Activated CD4-positive, alpha-beta memory T cell treated with anti-CD3 and anti-CD28 coated beads, Interleukin-2, amount 10 ng/mL, durations not matched to agents 7 days and 5 days (primary cell): ENCODE measurements at regions of chr2 and their contacts with region 1.

Region 1: DNA sequence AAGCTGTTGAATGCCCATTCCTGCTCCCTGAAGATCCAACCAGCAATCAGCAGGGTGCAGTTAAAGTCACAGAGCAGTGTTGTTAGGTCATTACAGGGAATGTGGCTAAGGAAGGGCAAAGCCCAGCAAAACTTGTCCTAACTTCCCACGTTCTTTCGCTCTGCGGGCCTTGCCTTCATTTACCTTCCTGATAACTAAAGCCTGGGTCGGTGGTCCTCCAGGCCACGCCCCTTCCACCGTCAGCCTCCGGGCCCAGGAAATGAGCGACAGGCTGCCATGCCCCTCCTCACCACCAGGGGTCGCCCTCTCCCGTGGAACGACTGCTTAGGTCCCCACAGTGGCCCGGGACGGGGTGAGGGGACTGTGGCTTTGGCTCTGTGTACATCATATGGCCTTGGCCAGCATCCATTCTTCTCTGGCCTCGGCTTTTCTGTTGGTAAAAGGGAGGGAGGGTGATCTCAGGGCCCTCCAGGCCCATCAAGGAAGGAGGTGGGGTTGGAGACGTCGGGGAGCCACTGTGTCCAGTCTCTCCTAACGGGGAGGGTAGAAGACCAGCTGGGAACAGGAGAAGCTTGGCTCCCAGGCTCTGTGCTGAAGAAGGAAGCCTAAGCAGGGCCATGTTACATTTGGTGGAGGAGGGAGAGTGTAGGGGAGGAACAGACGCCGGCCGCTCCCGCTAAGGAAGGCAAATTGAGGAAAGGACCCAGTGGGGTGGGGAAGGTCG is 2.2 kb downstream of the SH2D6 start:
- DNase-seq: peak; percentile 92
- H3K4me3 Mint-ChIP-seq: peak overlapping the region; percentile 66
- H3K27ac Mint-ChIP-seq: peak overlapping the region; percentile 77
- H3K4me1 Mint-ChIP-seq: peaks cover 33% of the 10 kb centered on the region
- H3K27me3 Mint-ChIP-seq: no peaks in the 10 kb centered on the region

Region 2: GRCh38 chr2:85354286-85355072 is 66.2 kb before region 1 on chr2 and contains the starts of genes ELMOD3 and RETSAT:
- CTCF ChIA-PET with region 1: interaction called, 8 read pairs
- POLR2A ChIA-PET with region 1: interaction called, 26 read pairs
- DNase-seq: peak; percentile 98
- H3K4me3 Mint-ChIP-seq: peak within 1 kb of the TSS; percentile 99
- H3K27ac Mint-ChIP-seq: peak within 1 kb of the TSS; percentile 93
- H3K4me1 Mint-ChIP-seq: peaks cover 45% of the 10 kb centered on the region
- H3K27me3 Mint-ChIP-seq: no peaks in the 10 kb centered on the region
- total RNA-seq, gene ELMOD3: 19.2 to 19.4 TPM
- total RNA-seq, gene RETSAT: 30.1 to 31.1 TPM

Region 3: DNA sequence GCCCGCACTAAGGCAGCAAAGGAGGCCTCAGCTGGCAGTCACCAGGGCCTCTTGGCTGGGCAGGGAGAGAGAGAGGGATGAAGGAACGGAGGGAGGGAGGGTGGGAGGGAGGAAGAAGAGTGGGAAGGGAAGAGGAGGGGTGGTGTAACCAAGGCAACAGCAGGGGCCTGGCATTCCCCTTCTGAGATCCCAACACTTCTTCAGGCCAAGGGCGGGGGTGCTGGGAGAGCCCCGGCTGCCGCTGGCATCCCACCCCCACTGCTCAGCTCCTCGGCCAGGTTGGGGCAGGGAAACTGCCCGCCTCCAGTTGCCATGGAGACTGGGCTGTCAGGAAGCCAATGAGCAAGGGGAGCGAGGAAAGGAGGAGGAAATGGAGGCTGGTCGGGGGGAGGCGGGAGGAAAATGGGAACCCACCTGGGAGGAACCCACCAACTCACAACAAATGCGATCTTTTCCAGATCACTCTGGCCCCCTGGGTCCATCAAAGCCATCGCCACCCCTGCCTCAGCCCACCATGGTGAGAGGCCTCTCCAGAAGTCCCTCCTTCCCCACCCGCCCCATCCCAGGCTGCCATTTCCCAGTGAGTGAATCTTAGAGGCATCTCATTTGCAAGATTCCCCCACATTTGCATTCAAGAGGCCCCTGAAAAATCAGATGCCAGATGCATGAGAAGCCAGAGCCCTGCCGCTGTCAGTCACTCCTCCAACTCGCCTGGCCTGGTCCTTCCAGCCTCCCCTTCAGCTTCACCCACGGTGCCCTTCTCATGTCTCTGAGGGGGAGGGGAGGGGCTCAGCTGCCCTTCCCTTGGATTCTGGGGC is 10.3 kb after region 1 on chr2:
- CTCF ChIA-PET with region 1: interaction called, 17 read pairs
- POLR2A ChIA-PET with region 1: interaction called, 18 read pairs
- DNase-seq: no peak
- H3K4me3 Mint-ChIP-seq: no peak overlapping the region
- H3K27ac Mint-ChIP-seq: no peak overlapping the region
- H3K4me1 Mint-ChIP-seq: no peaks in the 10 kb centered on the region
- H3K27me3 Mint-ChIP-seq: no peaks in the 10 kb centered on the region

Region 4: GRCh38 chr2:85551698-85552678 is 131.3 kb after region 1 on chr2:
- CTCF ChIA-PET with region 1: interaction called, 182 read pairs
- POLR2A ChIA-PET with region 1: interaction called, 69 read pairs
- DNase-seq: peak; percentile 91
- H3K4me3 Mint-ChIP-seq: no peak overlapping the region
- H3K27ac Mint-ChIP-seq: peak overlapping the region; percentile 7
- H3K4me1 Mint-ChIP-seq: peaks cover 5% of the 10 kb centered on the region
- H3K27me3 Mint-ChIP-seq: no peaks in the 10 kb centered on the region

Region 5: DNA sequence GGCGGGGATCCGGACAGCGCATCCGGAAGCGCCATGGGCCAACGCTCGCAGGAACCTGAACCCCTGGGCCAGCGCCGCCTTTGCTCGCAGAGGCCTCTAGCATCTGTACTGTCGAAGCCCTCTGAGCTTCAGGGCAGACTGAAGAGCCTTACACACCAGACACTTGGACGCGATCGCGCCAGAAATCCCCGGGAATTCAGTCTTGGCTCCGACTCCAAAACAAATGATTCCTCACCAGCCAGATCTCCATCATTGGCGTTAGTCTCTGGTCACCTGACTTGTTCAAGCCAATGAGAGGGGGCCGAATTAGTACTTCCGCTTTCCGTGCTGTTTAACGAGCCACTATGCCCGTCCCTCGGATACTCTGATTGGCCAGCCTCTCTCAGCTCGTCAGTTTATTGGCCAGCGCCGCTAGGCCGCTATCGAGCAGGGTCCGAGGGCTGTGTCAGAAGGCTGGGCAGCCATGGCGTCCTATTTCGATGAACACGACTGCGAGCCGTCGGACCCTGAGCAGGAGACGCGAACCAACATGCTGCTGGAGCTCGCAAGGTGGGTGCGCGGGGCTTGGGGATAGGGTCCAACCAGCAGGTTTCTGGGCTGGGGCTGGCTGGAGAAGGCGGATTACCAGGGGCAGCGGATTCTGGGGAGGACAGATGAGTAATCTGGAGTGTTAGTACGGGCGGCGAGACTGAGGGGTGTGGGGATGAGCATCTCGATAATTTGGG is 174.8 kb after region 1 on chr2 and contains the start of gene RNF181:
- CTCF ChIA-PET with region 1: interaction called, 4 read pairs
- POLR2A ChIA-PET with region 1: interaction called, 11 read pairs
- DNase-seq: peak; percentile 94
- H3K4me3 Mint-ChIP-seq: peak within 1 kb of the TSS; percentile 96
- H3K27ac Mint-ChIP-seq: peak within 1 kb of the TSS; percentile 90
- H3K4me1 Mint-ChIP-seq: peaks cover 32% of the 10 kb centered on the region
- H3K27me3 Mint-ChIP-seq: no peaks in the 10 kb centered on the region
- total RNA-seq, gene RNF181: 117 to 121 TPM